ENCODE measurements at regions of chr21 and their contacts with region 1.

Region 1: GRCh38 chr21:41361786-41362604 is at the start of gene MX2:
- DNase-seq: peak; percentile 64 to 96 (median 94)
- ATAC-seq: peak; percentile 86
- H3K4me3 ChIP-seq: peak within 1 kb of the TSS; percentile 84
- H3K4me3 Mint-ChIP-seq: peak within 1 kb of the TSS; percentile 90 to 98 (median 96)
- H3K27ac ChIP-seq: peak within 1 kb of the TSS; percentile 96
- H3K27ac Mint-ChIP-seq: peak within 1 kb of the TSS; percentile 99 to 100 (median 100)
- H3K4me1 ChIP-seq: peaks cover 21 to 38% of the 10 kb centered on the region in 2 donors
- H3K4me1 Mint-ChIP-seq: peaks cover 31 to 67% (median 60%) of the 10 kb centered on the region in 7 donors
- H3K27me3 ChIP-seq: no peaks in the 10 kb centered on the region
- H3K27me3 Mint-ChIP-seq: no peaks in the 10 kb centered on the region
- total RNA-seq, gene MX2: 84.8 to 116 (median 100) TPM

Region 2: DNA sequence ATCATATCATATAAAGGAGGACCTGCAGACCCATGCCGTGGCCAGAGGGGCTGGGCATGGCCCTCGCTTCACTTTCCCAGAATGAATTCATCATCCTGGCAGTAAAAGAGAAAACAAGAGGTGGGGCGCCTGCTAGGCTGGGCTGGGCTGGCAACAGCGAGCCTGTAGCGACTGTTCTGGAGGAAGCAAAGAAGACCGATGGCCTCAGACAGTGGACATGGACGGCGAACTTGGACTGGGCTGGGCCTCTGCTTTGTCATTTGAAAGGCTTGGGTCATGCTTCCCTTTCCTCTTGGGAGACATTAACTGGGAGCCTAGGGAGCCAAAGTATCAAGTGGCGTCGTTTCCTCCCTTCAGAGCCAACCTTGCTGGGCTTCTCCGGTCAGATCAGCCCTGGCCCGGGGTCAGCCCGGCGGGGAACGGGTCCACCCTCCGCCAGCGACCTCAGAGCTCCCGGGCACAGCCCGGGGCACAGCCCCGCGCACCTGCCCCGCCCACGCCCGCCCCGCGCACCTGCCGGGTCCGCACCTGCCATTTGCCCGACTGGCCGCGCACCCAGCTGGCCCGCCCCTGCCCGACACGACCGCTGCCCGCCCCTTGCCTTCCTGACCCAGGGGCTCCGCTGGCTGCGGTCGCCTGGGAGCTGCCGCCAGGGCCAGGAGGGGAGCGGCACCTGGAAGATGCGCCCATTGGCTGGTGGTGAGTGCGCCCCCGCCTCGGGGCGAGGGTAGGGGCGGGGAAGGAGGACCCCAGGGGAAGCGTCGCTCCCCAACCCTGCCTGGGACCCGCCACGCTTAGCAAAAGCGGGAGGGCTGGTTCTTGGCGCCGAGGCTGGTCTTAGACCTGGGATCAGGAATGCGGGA is 45.6 kb before region 1 on chr21 and contains the start of gene FAM3B:
- CTCF ChIA-PET with region 1: no interaction called
- POLR2A ChIA-PET with region 1: no interaction called
- intact Hi-C with region 1: loop called in 1 of 2 experiments (anchors 1 kb)
- DNase-seq: no peak
- ATAC-seq: no peak
- H3K4me3 ChIP-seq: no peak within 1 kb of the TSS
- H3K4me3 Mint-ChIP-seq: peak within 1 kb of the TSS in 9 of 10 donors; percentile 41 to 79 (median 62)
- H3K27ac ChIP-seq: no peak within 1 kb of the TSS
- H3K27ac Mint-ChIP-seq: peak within 1 kb of the TSS in 1 of 9 donors; percentile 30
- H3K4me1 ChIP-seq: peaks cover 0 to 4% of the 10 kb centered on the region in 2 donors
- H3K4me1 Mint-ChIP-seq: peaks cover 0 to 30% (median 10%) of the 10 kb centered on the region in 7 donors
- H3K27me3 ChIP-seq: no peaks in the 10 kb centered on the region
- H3K27me3 Mint-ChIP-seq: peaks cover 29 to 64% (median 41%) of the 10 kb centered on the region in 5 donors
- total RNA-seq, gene FAM3B: not detected

Region 3: GRCh38 chr21:41419911-41420862 is 58.2 kb after region 1 on chr21:
- CTCF ChIA-PET with region 1: no interaction called
- POLR2A ChIA-PET with region 1: interaction called, 82 read pairs
- intact Hi-C with region 1: loop called (anchors 1 kb)
- DNase-seq: peak in 7 of 9 donors; percentile 18 to 53 (median 33)
- ATAC-seq: peak; percentile 88
- H3K4me3 ChIP-seq: peak overlapping the region; percentile 77
- H3K4me3 Mint-ChIP-seq: peak overlapping the region; percentile 89 to 92 (median 90)
- H3K27ac ChIP-seq: peak overlapping the region; percentile 67
- H3K27ac Mint-ChIP-seq: peak overlapping the region; percentile 76 to 100 (median 94)
- H3K4me1 ChIP-seq: peaks cover 0 to 10% of the 10 kb centered on the region in 2 donors
- H3K4me1 Mint-ChIP-seq: peaks cover 12 to 57% (median 49%) of the 10 kb centered on the region in 7 donors
- H3K27me3 ChIP-seq: no peaks in the 10 kb centered on the region
- H3K27me3 Mint-ChIP-seq: peaks cover 0 to 10% (median 0%) of the 10 kb centered on the region in 5 donors

Region 4: GRCh38 chr21:41425954-41426675 is 64.1 kb after region 1 on chr21 and contains the start of gene MX1:
- CTCF ChIA-PET with region 1: no interaction called
- POLR2A ChIA-PET with region 1: interaction called, 82 read pairs
- intact Hi-C with region 1: loop called (anchors 1 kb)
- DNase-seq: peak; percentile 76 to 90 (median 87)
- ATAC-seq: peak; percentile 100
- H3K4me3 ChIP-seq: peak within 1 kb of the TSS; percentile 99
- H3K4me3 Mint-ChIP-seq: peak within 1 kb of the TSS; percentile 94 to 98 (median 97)
- H3K27ac ChIP-seq: peak within 1 kb of the TSS; percentile 92
- H3K27ac Mint-ChIP-seq: peak within 1 kb of the TSS; percentile 95 to 100 (median 98)
- H3K4me1 ChIP-seq: peaks cover 10 to 12% of the 10 kb centered on the region in 2 donors
- H3K4me1 Mint-ChIP-seq: peaks cover 16 to 83% (median 62%) of the 10 kb centered on the region in 7 donors
- H3K27me3 ChIP-seq: no peaks in the 10 kb centered on the region
- H3K27me3 Mint-ChIP-seq: no peaks in the 10 kb centered on the region
- total RNA-seq, gene MX1: 67.6 to 384 (median 74.5) TPM